ENCODE measurements at regions of chr2 and their contacts with region 1.

Region 1: DNA sequence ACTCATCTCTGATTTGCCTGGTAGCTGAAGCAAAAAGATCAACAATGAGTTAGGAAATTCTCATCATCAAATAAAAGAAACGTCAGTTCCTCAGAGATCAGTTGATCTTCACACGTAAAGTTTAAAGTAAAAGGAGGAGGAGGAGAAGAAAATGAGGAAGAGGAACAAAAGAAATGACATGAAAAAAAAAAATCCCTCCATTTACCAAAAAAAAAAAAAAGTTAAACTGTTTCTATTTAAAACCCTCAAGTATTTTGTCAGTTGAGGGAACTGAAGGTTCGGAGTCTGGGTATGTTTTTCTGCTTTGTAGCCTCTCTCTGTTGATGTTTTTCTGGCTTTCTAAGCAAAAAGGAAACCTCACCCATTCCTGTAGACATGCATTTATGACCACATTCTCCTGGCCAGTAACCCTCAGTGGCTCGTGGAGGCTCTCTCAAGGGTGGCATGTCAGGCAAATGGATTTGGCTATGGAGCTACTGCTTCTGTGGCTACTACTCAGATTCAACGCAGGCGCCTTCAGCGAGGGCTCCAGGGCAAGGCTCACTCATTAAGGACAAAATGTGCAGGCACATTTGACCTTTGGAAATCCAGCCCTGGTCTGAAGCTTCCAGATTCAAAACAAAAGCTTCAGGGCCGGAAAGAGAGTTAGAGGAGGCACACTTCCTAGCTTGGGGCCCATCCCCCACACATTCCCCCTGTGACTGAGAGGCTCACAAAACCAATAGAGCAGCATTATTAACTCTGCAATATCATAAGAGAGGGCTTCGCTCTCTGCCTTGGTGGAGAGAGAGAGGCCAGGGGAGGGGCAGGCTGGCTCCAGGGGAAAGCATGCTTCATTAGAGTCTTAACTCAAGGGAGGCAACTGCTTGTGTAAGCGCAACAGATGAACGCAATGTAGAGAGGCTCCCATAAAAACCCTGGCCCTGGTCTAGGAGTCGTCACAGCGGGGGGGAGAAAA is 22.3 kb downstream of the KLF7 start:
- DNase-seq: peak; percentile 68 to 92 (median 88)
- H3K4me3 ChIP-seq: peak overlapping the region in 6 of 7 experiments; percentile 50 to 71 (median 62)
- H3K27ac ChIP-seq: peak overlapping the region; percentile 85 to 92
- H3K4me1 ChIP-seq: peaks cover 31 to 72% (median 56%) of the 10 kb centered on the region in 4 experiments
- H3K27me3 ChIP-seq: no peaks in the 10 kb centered on the region

Region 2: GRCh38 chr2:207107551-207107950 is 35.9 kb before region 1 on chr2:
- CTCF ChIA-PET with region 1: interaction called, 17 read pairs
- POLR2A ChIA-PET with region 1: interaction called, 5 read pairs
- DNase-seq: peak; percentile 69 to 97 (median 97)
- H3K4me3 ChIP-seq: peak overlapping the region in 5 of 7 experiments; percentile 7 to 55 (median 38)
- H3K27ac ChIP-seq: peak overlapping the region; percentile 65 to 78
- H3K4me1 ChIP-seq: peaks cover 22 to 48% (median 35%) of the 10 kb centered on the region in 4 experiments
- H3K27me3 ChIP-seq: no peaks in the 10 kb centered on the region

Region 3: GRCh38 chr2:207155516-207156444 is 12.3 kb after region 1 on chr2:
- CTCF ChIA-PET with region 1: interaction called, 10 read pairs
- POLR2A ChIA-PET with region 1: interaction called, 12 read pairs
- DNase-seq: no peak
- H3K4me3 ChIP-seq: no peak overlapping the region
- H3K27ac ChIP-seq: no peak overlapping the region
- H3K4me1 ChIP-seq: peaks cover 27 to 49% (median 38%) of the 10 kb centered on the region in 4 experiments
- H3K27me3 ChIP-seq: no peaks in the 10 kb centered on the region

Region 4: GRCh38 chr2:207166039-207166348 is 22.5 kb after region 1 on chr2:
- CTCF ChIA-PET with region 1: interaction called, 26 read pairs
- POLR2A ChIA-PET with region 1: interaction called, 49 read pairs
- DNase-seq: peak; percentile 99 to 100 (median 100)
- H3K4me3 ChIP-seq: peak overlapping the region; percentile 78 to 94 (median 85)
- H3K27ac ChIP-seq: peak overlapping the region; percentile 93 to 99
- H3K4me1 ChIP-seq: peaks cover 39 to 59% (median 43%) of the 10 kb centered on the region in 4 experiments
- H3K27me3 ChIP-seq: no peaks in the 10 kb centered on the region

Region 5: GRCh38 chr2:207473049-207473930 is 329.8 kb after region 1 on chr2:
- CTCF ChIA-PET with region 1: interaction called, 23 read pairs
- POLR2A ChIA-PET with region 1: no interaction called
- DNase-seq: peak; percentile 70 to 79 (median 78)
- H3K4me3 ChIP-seq: no peak overlapping the region
- H3K27ac ChIP-seq: no peak overlapping the region
- H3K4me1 ChIP-seq: peaks cover 0 to 12% (median 5%) of the 10 kb centered on the region in 4 experiments
- H3K27me3 ChIP-seq: no peaks in the 10 kb centered on the region